WTC11 (cell line): ENCODE measurements at regions of chr10 and their contacts with region 1.

Region 1: DNA sequence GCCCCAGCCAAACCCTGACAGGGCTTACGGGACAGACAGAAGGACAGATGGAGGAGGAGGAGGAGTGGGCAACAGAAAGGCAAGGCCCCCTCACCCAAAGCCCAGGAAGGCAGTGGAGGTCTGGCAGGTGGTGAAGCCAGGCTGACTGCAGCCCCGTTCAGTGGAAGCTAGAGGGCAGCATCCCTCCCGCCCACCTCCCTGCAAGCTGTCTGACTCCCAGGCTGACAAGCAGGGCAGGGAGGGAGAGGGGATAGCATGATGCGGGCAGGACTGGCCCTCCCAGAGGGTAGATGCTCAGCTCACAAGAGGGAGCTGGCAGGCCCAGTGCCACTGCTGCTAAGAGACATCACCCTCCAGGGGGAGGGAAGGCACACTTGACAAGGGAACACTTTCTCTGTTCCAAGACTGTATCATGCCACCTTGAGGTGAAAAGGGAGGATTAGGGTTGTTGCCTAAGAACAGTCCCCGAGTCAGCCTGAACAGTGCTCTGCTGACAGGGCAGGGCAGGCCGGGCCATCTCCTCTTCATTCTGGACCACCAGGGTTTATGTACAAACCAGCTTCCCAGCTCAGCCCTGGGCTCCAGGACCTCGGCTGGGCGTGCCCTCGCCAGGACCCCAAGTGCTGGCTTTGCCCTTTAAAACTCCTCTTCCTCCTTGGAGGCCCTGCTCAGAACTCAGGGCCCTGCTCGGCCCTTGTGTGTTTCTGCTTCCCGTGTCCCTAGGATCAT is 61.8 kb downstream of the RASGEF1A start:
- DNase-seq: peak; percentile 81
- ATAC-seq: peak; percentile 16
- H3K4me3 Mint-ChIP-seq: no peak overlapping the region
- H3K27ac Mint-ChIP-seq: no peak overlapping the region
- H3K4me1 Mint-ChIP-seq: 0 out of 2 replicates have a peak, but pooled peaks cover 4% of the 10 kb centered on the region
- H3K27me3 Mint-ChIP-seq: no peaks in the 10 kb centered on the region
- CTCF ChIP-seq: peak; percentile 68

Region 2: DNA sequence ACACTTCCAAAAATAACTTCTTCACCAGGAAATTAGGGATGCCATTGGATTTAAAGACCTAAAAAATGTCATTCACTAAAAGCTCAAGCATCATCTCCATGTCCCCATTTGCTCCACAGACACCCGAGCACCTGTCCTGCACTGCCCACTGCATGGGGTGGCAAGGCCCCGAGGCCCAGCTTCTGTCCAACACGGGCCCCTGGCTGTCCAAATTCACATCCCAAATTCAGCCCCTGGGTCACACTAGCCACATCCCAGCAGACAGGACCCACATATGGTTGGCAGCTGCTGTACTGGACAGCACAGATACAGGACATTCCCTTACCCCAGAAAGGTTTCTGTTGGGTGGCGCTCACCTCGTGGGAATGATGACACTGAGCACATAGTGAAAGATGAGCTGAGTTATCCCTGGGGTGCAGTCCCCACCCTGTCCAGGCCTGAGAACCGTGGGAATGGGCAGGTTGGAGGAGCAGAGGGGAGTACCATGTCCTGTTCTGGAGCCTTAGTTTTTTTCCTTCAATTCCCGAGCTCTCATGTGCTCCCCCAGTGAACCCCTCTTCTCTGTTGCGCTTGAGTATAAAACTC is 11.5 kb before region 1 on chr10:
- CTCF ChIA-PET with region 1: interaction called, 36 read pairs
- POLR2A ChIA-PET with region 1: no interaction called
- DNase-seq: no peak
- ATAC-seq: no peak
- H3K4me3 Mint-ChIP-seq: no peak overlapping the region
- H3K27ac Mint-ChIP-seq: 0 out of 2 replicates have a peak overlapping the region, but pooled peaks have one; percentile 63
- H3K4me1 Mint-ChIP-seq: peaks cover 5% of the 10 kb centered on the region
- H3K27me3 Mint-ChIP-seq: no peaks in the 10 kb centered on the region
- CTCF ChIP-seq: no peak

Region 3: GRCh38 chr10:43229208-43230061 is 24.3 kb after region 1 on chr10:
- CTCF ChIA-PET with region 1: interaction called, 48 read pairs
- POLR2A ChIA-PET with region 1: no interaction called
- DNase-seq: peak; percentile 65
- ATAC-seq: peak; percentile 78
- H3K4me3 Mint-ChIP-seq: peak overlapping the region; percentile 74
- H3K27ac Mint-ChIP-seq: no peak overlapping the region
- H3K4me1 Mint-ChIP-seq: peaks cover 7% of the 10 kb centered on the region
- H3K27me3 Mint-ChIP-seq: peaks cover 51% of the 10 kb centered on the region
- CTCF ChIP-seq: no peak

Region 4: GRCh38 chr10:43255634-43256431 is 50.7 kb after region 1 on chr10:
- CTCF ChIA-PET with region 1: interaction called, 94 read pairs
- POLR2A ChIA-PET with region 1: no interaction called
- DNase-seq: peak; percentile 74
- ATAC-seq: peak; percentile 94
- H3K4me3 Mint-ChIP-seq: no peak overlapping the region
- H3K27ac Mint-ChIP-seq: no peak overlapping the region
- H3K4me1 Mint-ChIP-seq: peaks cover 15% of the 10 kb centered on the region
- H3K27me3 Mint-ChIP-seq: no peaks in the 10 kb centered on the region; the same call in 1 of the 2 replicates
- CTCF ChIP-seq: peak; percentile 63

Region 5: DNA sequence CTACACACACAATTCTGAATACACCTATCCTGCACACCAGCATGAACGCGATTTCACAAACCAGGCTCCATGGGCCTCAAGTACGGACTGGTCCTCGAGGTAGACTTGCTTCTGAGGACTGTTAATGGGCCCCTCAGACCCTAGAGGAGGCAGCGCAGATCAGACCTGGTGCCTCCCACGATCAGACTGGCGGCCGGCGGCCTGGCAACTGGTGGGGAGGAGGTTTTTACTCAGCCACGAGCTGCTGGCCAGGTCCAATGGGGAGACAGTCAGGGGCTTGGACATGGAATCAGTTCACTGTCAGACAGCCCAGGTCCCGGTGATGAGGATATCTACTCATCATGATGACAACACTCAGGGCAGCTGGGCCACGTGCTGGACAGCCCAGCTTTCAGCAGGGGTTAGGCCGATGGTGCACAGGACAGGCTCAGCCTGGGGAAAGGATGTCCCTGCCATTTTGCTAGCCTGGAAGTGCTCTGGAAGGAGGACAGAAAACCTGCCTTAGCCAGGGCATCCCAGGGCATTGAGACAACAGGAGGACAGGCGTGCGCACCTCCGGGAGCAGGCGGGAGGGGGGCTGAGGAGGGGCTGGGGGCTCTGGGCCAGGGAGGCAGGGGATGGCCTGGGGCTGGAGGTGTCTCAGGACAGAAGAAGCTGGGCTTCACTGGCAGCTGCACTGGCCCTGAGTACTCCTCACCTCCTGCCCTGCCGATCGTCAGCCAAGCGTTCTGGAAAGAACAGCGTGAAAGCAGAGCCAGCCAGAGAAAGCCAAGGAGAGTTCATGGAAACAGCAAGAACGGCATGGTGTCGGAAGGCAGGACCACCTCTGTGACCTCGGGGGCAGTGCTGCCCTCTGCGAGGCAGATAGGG is 109.8 kb after region 1 on chr10:
- CTCF ChIA-PET with region 1: interaction called, 13 read pairs
- POLR2A ChIA-PET with region 1: no interaction called
- DNase-seq: no peak
- ATAC-seq: no peak
- H3K4me3 Mint-ChIP-seq: no peak overlapping the region
- H3K27ac Mint-ChIP-seq: no peak overlapping the region
- H3K4me1 Mint-ChIP-seq: peaks cover 25% of the 10 kb centered on the region
- H3K27me3 Mint-ChIP-seq: no peaks in the 10 kb centered on the region
- CTCF ChIP-seq: no peak

Region 6: DNA sequence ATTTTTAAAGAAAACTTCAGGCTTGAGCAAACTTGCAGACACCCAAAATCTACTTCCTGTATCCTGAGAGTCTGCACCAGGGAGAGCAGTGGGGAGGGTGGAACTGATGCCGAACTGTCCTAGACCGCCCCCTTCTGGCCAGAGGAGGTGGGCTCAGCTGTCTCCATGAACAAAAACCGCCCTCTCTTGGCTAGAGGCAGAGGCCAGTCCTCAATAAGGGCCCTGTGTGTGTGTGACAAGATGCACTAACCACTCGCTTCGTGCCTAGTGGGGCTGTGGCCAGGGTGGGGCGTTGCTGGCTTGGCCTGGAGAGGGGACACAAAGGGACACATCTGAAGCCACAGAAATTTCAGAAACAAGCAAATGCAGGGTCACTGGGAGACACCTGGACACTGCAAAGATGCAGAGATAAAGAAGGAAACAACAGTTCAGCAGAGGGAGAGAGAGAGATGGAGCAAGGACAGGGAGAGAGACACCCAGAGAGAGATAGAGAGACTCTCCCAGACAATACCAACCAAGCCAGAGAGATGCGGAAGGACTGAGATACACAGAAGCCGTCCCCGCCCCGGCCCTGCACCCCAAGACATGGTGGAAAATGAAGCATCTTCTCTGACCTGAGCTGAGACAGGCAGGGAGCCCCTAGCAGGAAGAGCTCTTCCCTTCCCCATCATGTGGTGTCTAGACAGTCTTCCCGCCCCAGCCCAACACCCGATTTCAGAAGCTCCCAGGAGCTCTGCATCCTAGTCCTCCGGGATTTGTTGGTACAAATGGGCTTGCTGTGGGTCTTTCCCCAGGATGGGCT is 143.6 kb after region 1 on chr10:
- CTCF ChIA-PET with region 1: interaction called, 28 read pairs
- POLR2A ChIA-PET with region 1: no interaction called
- DNase-seq: peak; percentile 88
- ATAC-seq: peak; percentile 99
- H3K4me3 Mint-ChIP-seq: no peak overlapping the region
- H3K27ac Mint-ChIP-seq: peak overlapping the region; percentile 81
- H3K4me1 Mint-ChIP-seq: peaks cover 20% of the 10 kb centered on the region
- H3K27me3 Mint-ChIP-seq: no peaks in the 10 kb centered on the region
- CTCF ChIP-seq: peak; percentile 87